K562 (cell line): ENCODE measurements at regions of chr19 and their contacts with region 1.

Region 1: GRCh38 chr19:1039646-1040475 is at the start of gene ABCA7:
- DNase-seq: peak; percentile 91 to 99 (median 95)
- ATAC-seq: peak; percentile 89
- H3K4me3 ChIP-seq: peak within 1 kb of the TSS; percentile 55
- H3K27ac ChIP-seq: peak within 1 kb of the TSS; percentile 72
- H3K4me1 ChIP-seq: peaks cover 38 to 80% of the 10 kb centered on the region in 2 experiments
- H3K27me3 ChIP-seq: no peaks in the 10 kb centered on the region
- CTCF ChIP-seq: peak in 1 of 3 experiments; percentile 5; a peak in 1 of 6 replicates
- EP300 ChIP-seq: no peak
- POLR2A ChIP-seq: peak; percentile 67
- RAD21 ChIP-seq: no peak; a peak in 1 of 4 replicates
- polyA plus RNA-seq, gene ABCA7: 2.3 to 3.0 TPM

Region 2: GRCh38 chr19:984165-984967 is 55.5 kb before region 1 on chr19 and contains the start of gene WDR18:
- CTCF ChIA-PET with region 1: no interaction called
- POLR2A ChIA-PET with region 1: no interaction called
- in situ Hi-C with region 1: no loop called
- intact Hi-C with region 1: no loop called
- DNase-seq: peak; percentile 94 to 97 (median 95)
- ATAC-seq: peak; percentile 78
- H3K4me3 ChIP-seq: peak within 1 kb of the TSS; percentile 100
- H3K27ac ChIP-seq: peak within 1 kb of the TSS; percentile 91
- H3K4me1 ChIP-seq: peaks cover 24 to 78% of the 10 kb centered on the region in 2 experiments
- H3K27me3 ChIP-seq: no peaks in the 10 kb centered on the region
- CTCF ChIP-seq: no peak
- EP300 ChIP-seq: no peak
- POLR2A ChIP-seq: peak; percentile 78; the same call in 1 of the 2 replicates
- RAD21 ChIP-seq: no peak
- polyA plus RNA-seq, gene WDR18: 0.65 to 1.1 TPM

Region 3: GRCh38 chr19:1020868-1021425 is 18.9 kb before region 1 on chr19 and contains the start of gene TMEM259:
- CTCF ChIA-PET with region 1: no interaction called
- POLR2A ChIA-PET with region 1: interaction called, 176 read pairs
- in situ Hi-C with region 1: no loop called
- intact Hi-C with region 1: loop called (anchors 2 kb)
- DNase-seq: peak; percentile 87 to 97 (median 92)
- ATAC-seq: peak; percentile 90
- H3K4me3 ChIP-seq: peak within 1 kb of the TSS; percentile 94
- H3K27ac ChIP-seq: peak within 1 kb of the TSS; percentile 100
- H3K4me1 ChIP-seq: peaks cover 27 to 76% of the 10 kb centered on the region in 2 experiments
- H3K27me3 ChIP-seq: no peaks in the 10 kb centered on the region
- CTCF ChIP-seq: no peak
- EP300 ChIP-seq: no peak
- POLR2A ChIP-seq: no peak
- RAD21 ChIP-seq: no peak
- polyA plus RNA-seq, gene TMEM259: 0.52 to 0.57 TPM

Region 4: GRCh38 chr19:1026189-1027019 is 13.5 kb before region 1 on chr19 and contains the start of gene CNN2:
- CTCF ChIA-PET with region 1: no interaction called
- POLR2A ChIA-PET with region 1: interaction called, 176 read pairs
- in situ Hi-C with region 1: no loop called
- intact Hi-C with region 1: loop called (anchors 1 kb)
- DNase-seq: peak; percentile 76 to 88 (median 82)
- ATAC-seq: peak; percentile 89
- H3K4me3 ChIP-seq: peak within 1 kb of the TSS; percentile 87
- H3K27ac ChIP-seq: peak within 1 kb of the TSS; percentile 98
- H3K4me1 ChIP-seq: peaks cover 22 to 73% of the 10 kb centered on the region in 2 experiments
- H3K27me3 ChIP-seq: no peaks in the 10 kb centered on the region
- CTCF ChIP-seq: no peak
- EP300 ChIP-seq: no peak
- POLR2A ChIP-seq: peak; percentile 74
- RAD21 ChIP-seq: no peak
- polyA plus RNA-seq, gene CNN2: 12.1 to 12.8 TPM

Region 5: DNA sequence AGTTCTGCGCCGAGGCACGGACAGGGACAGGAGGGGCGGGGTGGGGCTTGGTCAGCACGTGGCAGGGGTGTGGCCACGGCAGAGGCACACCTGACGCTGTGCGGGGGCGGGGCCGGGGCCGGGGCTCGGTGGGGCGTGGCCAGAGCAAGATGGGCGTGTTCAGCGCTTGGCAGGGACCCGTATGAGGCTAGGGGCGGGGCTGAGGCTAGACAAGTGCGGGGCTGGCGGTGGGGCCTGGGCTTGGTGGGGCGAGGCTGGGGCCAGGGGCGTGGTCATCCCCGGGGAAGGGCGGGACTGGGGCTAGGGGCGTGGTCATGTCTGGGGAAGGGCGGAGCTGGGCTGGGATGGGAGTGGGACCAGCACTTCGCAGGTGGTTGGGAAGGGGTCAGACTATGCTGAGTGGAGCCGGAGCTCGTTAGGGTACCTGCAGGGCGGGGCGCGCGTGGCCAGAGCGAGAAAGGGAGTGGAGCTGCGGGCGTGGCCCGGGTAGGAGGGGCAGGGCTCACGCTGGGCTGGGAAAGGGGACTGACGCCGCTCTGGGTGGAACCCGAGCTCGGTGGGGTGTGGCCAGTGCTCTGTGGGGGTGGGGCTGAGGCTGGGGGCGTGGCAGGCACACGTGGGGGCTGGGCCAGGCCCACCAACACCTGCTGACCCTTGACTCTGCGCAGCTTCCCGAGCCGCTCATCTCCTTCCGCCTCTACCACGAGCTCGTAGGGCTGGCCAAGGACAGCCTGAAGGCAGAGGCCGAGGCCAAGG is 42.5 kb after region 1 on chr19:
- CTCF ChIA-PET with region 1: no interaction called
- POLR2A ChIA-PET with region 1: interaction called, 4 read pairs
- in situ Hi-C with region 1: no loop called
- intact Hi-C with region 1: loop called (anchors 5 kb)
- DNase-seq: peak; percentile 95 to 97 (median 96)
- ATAC-seq: peak; percentile 94
- H3K4me3 ChIP-seq: peak overlapping the region; percentile 54
- H3K27ac ChIP-seq: peak overlapping the region; percentile 69; the same call in 2 of the 3 replicates
- H3K4me1 ChIP-seq: peaks cover 6 to 76% of the 10 kb centered on the region in 2 experiments
- H3K27me3 ChIP-seq: no peaks in the 10 kb centered on the region
- CTCF ChIP-seq: no peak
- EP300 ChIP-seq: no peak
- POLR2A ChIP-seq: peak; percentile 17; the same call in 1 of the 2 replicates
- RAD21 ChIP-seq: no peak

Region 6: DNA sequence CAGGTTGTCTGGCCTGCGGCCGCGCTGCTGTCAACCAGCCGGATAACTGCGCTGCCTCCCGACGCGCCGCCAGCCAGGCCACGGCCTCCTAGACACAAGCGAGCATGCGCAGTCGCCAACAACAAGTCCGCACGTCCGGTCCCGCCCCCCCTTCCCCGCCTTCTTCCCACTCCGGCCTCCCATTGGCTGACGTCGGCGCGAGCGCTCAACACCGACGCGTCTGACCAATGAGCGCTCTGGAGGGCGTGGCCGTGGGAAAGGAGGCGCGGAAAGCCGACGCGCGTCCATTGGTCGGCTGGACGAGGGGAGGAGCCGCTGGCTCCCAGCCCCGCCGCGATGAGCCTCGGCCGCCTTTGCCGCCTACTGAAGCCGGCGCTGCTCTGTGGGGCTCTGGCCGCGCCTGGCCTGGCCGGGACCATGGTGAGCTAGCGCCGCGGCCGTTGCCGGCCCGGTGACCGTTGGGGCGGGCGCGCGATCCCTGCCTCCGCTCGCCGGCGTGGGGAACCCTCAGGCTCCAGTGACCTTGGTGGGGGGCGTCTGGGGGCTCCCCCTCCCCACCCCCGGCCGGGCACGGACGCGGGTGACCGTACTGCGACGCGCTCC is 63.9 kb after region 1 on chr19 and contains the start of gene GPX4:
- CTCF ChIA-PET with region 1: no interaction called
- POLR2A ChIA-PET with region 1: interaction called, 3 read pairs
- in situ Hi-C with region 1: no loop called
- intact Hi-C with region 1: loop called (anchors 5 kb)
- DNase-seq: peak; percentile 95 to 100 (median 97)
- ATAC-seq: peak; percentile 95
- H3K4me3 ChIP-seq: peak within 1 kb of the TSS; percentile 97
- H3K27ac ChIP-seq: peak within 1 kb of the TSS; percentile 98
- H3K4me1 ChIP-seq: peaks cover 27 to 70% of the 10 kb centered on the region in 2 experiments
- H3K27me3 ChIP-seq: no peaks in the 10 kb centered on the region
- CTCF ChIP-seq: no peak
- EP300 ChIP-seq: no peak
- POLR2A ChIP-seq: peak; percentile 97
- RAD21 ChIP-seq: no peak
- polyA plus RNA-seq, gene GPX4: 61.4 to 125 TPM